ENCODE measurements at regions of chrX and their contacts with region 1.

Region 1: GRCh38 chrX:38985375-38985774 is 184.1 kb downstream of the MID1IP1 start:
- DNase-seq: peak; percentile 75
- H3K4me3 ChIP-seq: no peak overlapping the region
- H3K27ac ChIP-seq: no peak overlapping the region
- H3K4me1 ChIP-seq: peaks cover 4% of the 10 kb centered on the region
- CTCF ChIP-seq: peak; percentile 70

Region 2: GRCh38 chrX:38754102-38754790 is 231.1 kb before region 1 on chrX:
- CTCF ChIA-PET with region 1: no interaction called
- POLR2A ChIA-PET with region 1: no interaction called
- intact Hi-C with region 1: loop called (anchors 5 kb)
- DNase-seq: peak; percentile 48
- H3K4me3 ChIP-seq: no peak overlapping the region
- H3K27ac ChIP-seq: no peak overlapping the region
- H3K4me1 ChIP-seq: no peaks in the 10 kb centered on the region
- CTCF ChIP-seq: peak; percentile 84

Region 3: GRCh38 chrX:38768079-38768478 is 217.3 kb before region 1 on chrX:
- CTCF ChIA-PET with region 1: no interaction called
- POLR2A ChIA-PET with region 1: no interaction called
- intact Hi-C with region 1: loop called (anchors 5 kb)
- DNase-seq: peak; percentile 33
- H3K4me3 ChIP-seq: no peak overlapping the region
- H3K27ac ChIP-seq: no peak overlapping the region
- H3K4me1 ChIP-seq: no peaks in the 10 kb centered on the region
- CTCF ChIP-seq: peak; percentile 70

Region 4: DNA sequence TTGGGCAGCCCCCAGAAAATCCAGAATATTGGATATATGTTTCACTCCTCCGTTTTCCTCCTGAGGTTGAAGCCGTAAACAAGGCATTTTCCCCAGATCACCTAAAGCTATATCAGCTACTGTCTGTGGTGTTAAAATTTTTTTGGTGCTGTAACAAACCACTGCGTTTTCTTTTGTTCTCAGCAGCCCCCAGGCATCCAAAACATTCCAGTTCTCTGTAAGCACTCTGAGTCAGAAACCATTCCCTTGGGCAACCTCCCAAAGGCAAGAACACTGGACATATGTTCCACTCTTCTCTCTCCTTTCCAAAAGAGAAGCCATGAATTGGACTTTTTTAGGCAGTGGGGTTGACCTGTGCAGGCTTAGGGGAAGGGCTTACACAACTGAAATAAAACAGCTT is 126.8 kb after region 1 on chrX:
- CTCF ChIA-PET with region 1: no interaction called
- POLR2A ChIA-PET with region 1: no interaction called
- intact Hi-C with region 1: no loop called
- DNase-seq: no peak
- H3K4me3 ChIP-seq: no peak overlapping the region
- H3K27ac ChIP-seq: no peak overlapping the region
- H3K4me1 ChIP-seq: no peaks in the 10 kb centered on the region
- CTCF ChIP-seq: no peak

Region 5: GRCh38 chrX:39133971-39134370 is 148.6 kb after region 1 on chrX:
- CTCF ChIA-PET with region 1: no interaction called
- POLR2A ChIA-PET with region 1: no interaction called
- intact Hi-C with region 1: no loop called
- DNase-seq: peak; percentile 24
- H3K4me3 ChIP-seq: no peak overlapping the region
- H3K27ac ChIP-seq: no peak overlapping the region
- H3K4me1 ChIP-seq: no peaks in the 10 kb centered on the region
- CTCF ChIP-seq: peak; percentile 59

Region 6: DNA sequence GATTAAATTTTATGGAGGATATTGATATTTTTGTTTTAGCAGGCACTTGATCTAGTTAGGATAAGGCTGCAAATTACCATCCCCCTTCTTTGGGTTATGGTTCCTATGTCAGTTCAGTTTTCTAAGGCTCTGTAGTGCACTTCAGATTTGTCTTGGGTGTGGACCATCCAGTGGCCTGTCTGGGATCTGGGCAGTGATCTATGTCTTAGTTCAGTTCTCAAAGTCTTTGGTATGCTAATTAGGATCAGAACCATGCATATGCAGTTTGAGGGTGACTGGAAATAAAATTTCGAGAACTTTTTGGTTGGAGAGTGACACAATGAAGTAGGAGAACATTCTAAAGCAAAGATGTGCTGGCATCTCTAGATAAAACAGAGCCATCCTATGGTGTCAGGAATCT is 204.1 kb after region 1 on chrX:
- CTCF ChIA-PET with region 1: no interaction called
- POLR2A ChIA-PET with region 1: no interaction called
- intact Hi-C with region 1: no loop called
- DNase-seq: no peak
- H3K4me3 ChIP-seq: no peak overlapping the region
- H3K27ac ChIP-seq: no peak overlapping the region
- H3K4me1 ChIP-seq: no peaks in the 10 kb centered on the region
- CTCF ChIP-seq: no peak

Measured in OCI-LY7 (cell line).